ENCODE measurements at regions of chr1 and their contacts with region 1.

Region 1: DNA sequence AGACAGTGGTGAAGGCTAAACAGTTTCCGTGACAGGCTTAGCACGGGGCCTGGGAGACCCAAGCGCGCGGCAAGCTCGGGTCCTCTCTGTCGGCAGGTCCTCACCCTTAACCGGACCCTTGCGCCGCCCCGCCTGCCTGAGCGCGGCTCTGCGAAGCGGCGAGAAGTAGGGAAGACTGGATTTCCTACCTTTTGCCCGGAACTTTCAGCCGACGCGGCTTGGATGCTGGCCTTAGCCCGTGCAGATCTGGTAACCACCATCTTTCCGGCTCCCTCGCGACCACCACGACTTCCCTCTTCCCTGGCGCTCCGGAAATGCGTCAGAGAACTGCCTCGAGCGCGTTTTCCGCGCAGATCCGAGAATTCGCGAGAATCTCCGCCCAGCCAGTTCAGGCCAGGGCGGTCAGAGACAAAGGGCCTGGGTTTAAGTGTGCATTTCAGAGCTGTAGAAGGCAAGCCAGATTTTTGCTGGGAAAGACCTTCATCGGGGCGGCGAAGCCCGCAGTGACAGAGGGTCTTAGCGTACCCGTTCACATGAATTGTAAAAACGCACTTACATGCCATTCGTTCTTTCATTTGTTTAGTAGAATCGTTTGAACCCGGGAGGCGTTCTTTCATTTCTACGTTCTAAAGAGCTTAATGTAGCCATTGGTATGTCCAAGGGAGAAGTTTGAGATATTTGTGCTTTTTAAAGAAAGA is at the start of gene DNTTIP2:
- H3K4me3 Mint-ChIP-seq: peak within 1 kb of the TSS; percentile 88
- H3K27ac Mint-ChIP-seq: peak within 1 kb of the TSS; percentile 95
- H3K4me1 Mint-ChIP-seq: peaks cover 43% of the 10 kb centered on the region
- H3K27me3 Mint-ChIP-seq: no peaks in the 10 kb centered on the region

Region 2: GRCh38 chr1:93853940-93854339 is 25.1 kb before region 1 on chr1:
- intact Hi-C with region 1: no loop called
- H3K4me3 Mint-ChIP-seq: no peak overlapping the region
- H3K27ac Mint-ChIP-seq: no peak overlapping the region
- H3K4me1 Mint-ChIP-seq: peaks cover 5% of the 10 kb centered on the region
- H3K27me3 Mint-ChIP-seq: peaks cover 17% of the 10 kb centered on the region

Region 3: DNA sequence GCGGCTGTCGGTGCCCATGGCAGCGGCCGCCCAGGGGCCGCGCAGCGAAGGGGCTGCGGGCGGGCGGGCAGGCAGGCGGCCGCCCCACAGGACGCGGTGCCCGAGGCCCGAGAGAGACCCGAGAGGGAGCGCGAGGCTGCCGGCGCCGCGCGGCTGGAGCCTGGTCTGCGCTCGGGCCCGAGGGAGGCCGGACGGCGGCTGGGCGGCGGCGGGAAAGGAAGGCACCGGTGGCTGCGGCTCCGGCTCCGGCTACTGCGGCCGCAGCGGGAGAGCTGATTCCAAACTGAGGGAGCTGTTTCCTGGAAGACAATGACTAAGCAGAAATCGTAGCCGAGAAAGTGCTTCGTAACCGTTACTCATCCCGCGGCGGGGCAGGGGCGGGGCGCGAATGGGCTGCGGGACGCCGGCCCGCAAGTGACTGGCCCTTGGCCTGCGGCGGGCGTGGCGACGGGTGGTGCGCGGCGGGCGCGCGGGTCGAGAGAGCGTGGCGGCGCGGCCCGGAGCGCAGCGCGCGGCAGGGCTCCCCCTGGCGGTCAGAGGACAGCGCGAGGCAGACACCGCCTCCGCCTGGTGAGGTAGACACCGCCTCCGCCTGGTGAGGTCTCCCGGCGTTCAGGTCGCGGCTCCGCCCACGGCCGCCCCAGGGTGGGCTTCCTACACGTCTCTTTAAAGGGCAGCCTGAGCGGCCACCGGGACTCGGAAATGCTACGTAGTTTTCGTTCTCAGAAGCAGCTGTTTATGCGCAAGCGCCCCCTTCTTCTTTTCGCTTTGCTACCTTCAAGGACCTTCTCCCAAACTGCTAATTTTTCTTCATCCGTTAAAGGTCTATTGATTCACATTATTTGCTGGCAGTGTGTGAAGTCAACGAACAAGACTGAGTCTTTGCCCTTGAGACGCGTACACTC is 30.4 kb after region 1 on chr1 and contains the start of gene GCLM:
- intact Hi-C with region 1: loop called (anchors 2 kb)
- H3K4me3 Mint-ChIP-seq: peak within 1 kb of the TSS; percentile 82
- H3K27ac Mint-ChIP-seq: peak within 1 kb of the TSS; percentile 78
- H3K4me1 Mint-ChIP-seq: peaks cover 28% of the 10 kb centered on the region
- H3K27me3 Mint-ChIP-seq: peaks cover 11% of the 10 kb centered on the region